ENCODE measurements at regions of chr18 and their contacts with region 1.

Region 1: GRCh38 chr18:37341016-37341415 is 224.6 kb downstream of the CELF4 start:
- DNase-seq: no peak
- H3K4me3 ChIP-seq: no peak overlapping the region
- H3K27ac ChIP-seq: no peak overlapping the region
- H3K4me1 ChIP-seq: peaks cover 4% of the 10 kb centered on the region
- H3K27me3 ChIP-seq: no peaks in the 10 kb centered on the region
- CTCF ChIP-seq: no peak

Region 2: GRCh38 chr18:37019157-37019827 is 321.7 kb before region 1 on chr18:
- CTCF ChIA-PET with region 1: no interaction called
- dilution Hi-C with region 1: no loop called
- in situ Hi-C with region 1: no loop called
- intact Hi-C with region 1: loop called (anchors 5 kb)
- DNase-seq: peak; percentile 62
- H3K4me3 ChIP-seq: no peak overlapping the region
- H3K27ac ChIP-seq: no peak overlapping the region
- H3K4me1 ChIP-seq: peaks cover 6% of the 10 kb centered on the region
- H3K27me3 ChIP-seq: no peaks in the 10 kb centered on the region
- CTCF ChIP-seq: peak; percentile 69 to 82

Region 3: GRCh38 chr18:37084890-37085289 is 256.1 kb before region 1 on chr18:
- CTCF ChIA-PET with region 1: no interaction called
- dilution Hi-C with region 1: no loop called
- in situ Hi-C with region 1: no loop called
- intact Hi-C with region 1: no loop called
- DNase-seq: no peak
- H3K4me3 ChIP-seq: no peak overlapping the region
- H3K27ac ChIP-seq: no peak overlapping the region
- H3K4me1 ChIP-seq: no peaks in the 10 kb centered on the region
- H3K27me3 ChIP-seq: no peaks in the 10 kb centered on the region
- CTCF ChIP-seq: no peak

Region 4: GRCh38 chr18:37299471-37300304 is 41.3 kb before region 1 on chr18:
- CTCF ChIA-PET with region 1: no interaction called
- dilution Hi-C with region 1: loop called (anchors 5 kb)
- in situ Hi-C with region 1: no loop called
- intact Hi-C with region 1: no loop called
- DNase-seq: peak; percentile 91
- H3K4me3 ChIP-seq: no peak overlapping the region
- H3K27ac ChIP-seq: peak overlapping the region; percentile 16
- H3K4me1 ChIP-seq: peaks cover 12% of the 10 kb centered on the region
- H3K27me3 ChIP-seq: no peaks in the 10 kb centered on the region
- CTCF ChIP-seq: no peak

Region 5: GRCh38 chr18:37435996-37436395 is 95.0 kb after region 1 on chr18:
- CTCF ChIA-PET with region 1: no interaction called
- dilution Hi-C with region 1: loop called (anchors 5 kb)
- in situ Hi-C with region 1: no loop called
- intact Hi-C with region 1: no loop called
- DNase-seq: peak; percentile 13
- H3K4me3 ChIP-seq: no peak overlapping the region
- H3K27ac ChIP-seq: no peak overlapping the region
- H3K4me1 ChIP-seq: peaks cover 9% of the 10 kb centered on the region
- H3K27me3 ChIP-seq: no peaks in the 10 kb centered on the region
- CTCF ChIP-seq: no peak

Region 6: GRCh38 chr18:37537868-37538525 is 197.0 kb after region 1 on chr18:
- CTCF ChIA-PET with region 1: no interaction called
- dilution Hi-C with region 1: no loop called
- in situ Hi-C with region 1: no loop called
- intact Hi-C with region 1: loop called (anchors 2 kb)
- DNase-seq: peak; percentile 37
- H3K4me3 ChIP-seq: no peak overlapping the region
- H3K27ac ChIP-seq: no peak overlapping the region
- H3K4me1 ChIP-seq: no peaks in the 10 kb centered on the region
- H3K27me3 ChIP-seq: peaks cover 13% of the 10 kb centered on the region
- CTCF ChIP-seq: peak; percentile 58 to 85